ENCODE measurements at regions of chr2 and their contacts with region 1.

Region 1: DNA sequence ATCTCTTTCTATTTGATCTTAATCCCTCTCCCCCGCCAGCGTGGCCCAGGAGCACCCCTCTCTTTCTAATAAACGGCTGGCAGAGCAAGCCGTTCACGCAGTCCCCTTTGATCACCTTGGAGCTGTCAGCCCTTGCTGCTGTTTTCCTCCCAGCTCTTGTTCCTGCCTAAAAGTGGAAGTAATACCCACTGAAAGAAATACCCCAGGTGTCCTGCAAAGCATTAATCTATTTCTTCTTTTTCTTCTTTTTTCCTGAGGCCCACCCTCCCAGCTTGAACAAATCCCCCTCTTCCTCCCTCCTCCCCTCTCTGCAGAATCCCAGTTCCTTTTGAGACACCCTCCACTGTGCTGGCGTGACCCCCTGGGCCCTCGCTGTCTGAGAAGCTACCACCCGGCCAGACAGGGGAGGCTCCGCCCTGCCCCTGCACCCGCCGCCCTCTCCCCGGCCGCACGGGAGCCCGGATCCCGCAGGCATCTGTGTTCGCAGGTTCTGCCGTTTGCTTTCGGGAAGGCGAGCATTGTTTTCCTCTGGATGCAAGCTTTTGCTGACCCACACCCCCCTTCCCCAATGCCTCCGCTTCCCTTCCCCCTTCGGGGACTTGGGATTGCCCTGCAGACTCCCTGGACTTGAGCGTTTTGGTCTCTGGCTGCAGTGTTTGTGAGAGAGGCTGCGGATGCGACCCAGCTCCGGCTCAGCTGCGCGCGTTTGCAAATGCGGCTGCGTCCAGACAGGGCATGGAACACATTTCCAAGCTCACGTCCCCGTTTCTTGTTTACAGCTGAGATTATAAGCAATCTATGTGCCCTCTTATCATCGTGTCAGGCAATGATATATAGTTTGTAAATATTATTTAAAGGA is 631.5 kb downstream of the NYAP2 start:
- DNase-seq: peak; percentile 60
- ATAC-seq: peak; percentile 97

Region 2: DNA sequence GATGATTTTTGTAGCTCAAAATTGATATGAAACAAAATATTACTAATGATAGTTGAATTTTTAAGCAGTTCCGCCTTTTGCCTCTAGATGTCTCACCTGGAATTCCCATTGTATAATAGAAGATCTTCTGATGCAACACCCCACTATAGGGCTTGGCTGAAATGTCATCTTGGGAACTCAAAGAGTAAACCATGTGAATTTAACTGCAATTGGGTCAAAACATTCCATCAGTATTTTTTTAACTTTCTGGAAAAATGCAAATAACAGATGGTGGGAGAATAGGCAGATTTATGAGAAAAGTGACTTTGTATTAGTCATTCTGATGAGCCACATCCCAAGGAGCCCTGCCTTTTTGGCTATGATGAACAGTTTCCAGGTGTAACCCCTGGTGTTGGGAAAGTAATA is 141.6 kb before region 1 on chr2:
- intact Hi-C with region 1: no loop called
- DNase-seq: no peak
- ATAC-seq: peak; percentile 57

Region 3: GRCh38 chr2:226052772-226053416 is 21.9 kb after region 1 on chr2:
- intact Hi-C with region 1: loop called in 1 of 2 experiments (anchors 1 kb)
- DNase-seq: no peak
- ATAC-seq: no peak

Region 4: GRCh38 chr2:226531061-226531810 is 500.2 kb after region 1 on chr2:
- intact Hi-C with region 1: no loop called
- DNase-seq: no peak
- ATAC-seq: no peak

Measured in left cardiac atrium (tissue), 4 donors.